A673 (cell line): ENCODE measurements at regions of chr1 and their contacts with region 1.

Region 1: DNA sequence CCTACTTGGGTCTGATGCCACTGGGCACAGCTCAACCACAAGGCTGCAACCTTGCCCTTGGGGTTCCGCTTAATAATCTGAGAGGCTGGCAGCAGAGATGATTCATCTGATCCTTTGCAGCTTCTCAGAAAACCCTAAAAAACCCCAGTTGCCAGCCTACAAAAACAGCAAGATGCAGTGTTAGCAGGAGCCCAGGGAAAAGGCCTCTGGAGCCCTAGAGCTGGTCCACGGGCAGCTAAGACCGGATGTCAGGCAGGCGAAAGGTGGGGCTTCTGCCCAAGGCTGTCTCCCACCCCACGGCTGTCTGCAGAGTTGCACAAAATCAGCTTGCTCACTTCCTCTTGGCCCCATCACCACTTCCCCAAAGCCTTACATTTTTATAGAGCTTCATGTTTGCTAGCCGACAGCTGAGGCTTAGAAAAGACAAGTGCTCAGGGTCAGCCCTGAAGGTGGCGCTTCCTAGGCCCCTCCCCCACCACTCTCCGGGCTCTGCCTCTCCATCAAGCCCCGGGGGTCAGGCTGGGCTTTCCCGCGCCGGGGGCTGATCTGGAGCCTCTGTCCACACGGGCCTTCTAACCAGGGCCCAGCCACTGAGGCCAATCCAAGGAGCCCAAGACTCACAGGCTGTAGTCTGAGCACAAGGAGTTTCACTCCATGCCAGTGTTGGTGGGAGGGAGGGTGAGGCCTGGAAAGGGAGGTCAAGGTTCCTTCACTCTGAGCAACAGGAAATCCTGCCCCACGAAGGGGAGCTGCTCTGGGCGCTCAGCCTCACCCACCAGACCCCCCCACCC is 4.2 kb upstream of the ADORA3 start:
- DNase-seq: no peak
- H3K4me3 ChIP-seq: no peak overlapping the region
- H3K27ac ChIP-seq: no peak overlapping the region
- H3K4me1 ChIP-seq: no peaks in the 10 kb centered on the region
- H3K27me3 ChIP-seq: peaks cover 4% of the 10 kb centered on the region
- CTCF ChIP-seq: no peak

Region 2: DNA sequence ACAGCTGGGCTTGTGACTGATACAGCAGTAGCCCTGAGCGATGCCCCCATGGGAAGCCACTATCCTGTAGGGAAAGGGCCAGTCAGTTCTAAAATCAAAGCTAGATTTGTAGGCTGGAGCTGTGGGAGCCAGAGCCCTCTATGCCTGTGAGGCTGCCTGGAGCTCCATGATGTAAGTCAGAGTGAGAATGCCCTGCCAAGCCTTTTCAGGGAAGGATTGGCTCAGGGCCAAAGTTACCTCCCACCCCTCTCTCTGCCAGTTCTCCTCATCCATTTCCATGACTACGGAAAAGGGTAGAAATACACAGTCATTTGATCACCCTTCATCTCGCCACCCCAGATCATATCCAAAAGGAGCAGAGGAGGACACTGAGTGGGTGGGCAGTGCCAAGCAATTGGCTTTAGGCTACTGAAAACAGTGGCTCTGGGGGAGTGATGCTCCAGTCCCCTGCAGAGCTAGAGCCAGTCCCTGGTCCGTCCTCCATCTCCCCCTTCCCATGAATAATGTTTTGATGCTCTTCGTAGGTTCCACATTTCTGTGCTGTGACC is 773.4 kb before region 1 on chr1:
- CTCF ChIA-PET with region 1: no interaction called
- POLR2A ChIA-PET with region 1: no interaction called
- intact Hi-C with region 1: no loop called
- DNase-seq: no peak
- H3K4me3 ChIP-seq: no peak overlapping the region
- H3K27ac ChIP-seq: no peak overlapping the region
- H3K4me1 ChIP-seq: no peaks in the 10 kb centered on the region
- H3K27me3 ChIP-seq: peaks cover 82% of the 10 kb centered on the region
- CTCF ChIP-seq: no peak

Region 3: GRCh38 chr1:111656086-111657017 is 148.7 kb after region 1 on chr1:
- CTCF ChIA-PET with region 1: interaction called, 15 read pairs
- POLR2A ChIA-PET with region 1: no interaction called
- intact Hi-C with region 1: loop called (anchors 5 kb)
- DNase-seq: peak; percentile 31
- H3K4me3 ChIP-seq: no peak overlapping the region
- H3K27ac ChIP-seq: no peak overlapping the region
- H3K4me1 ChIP-seq: peaks cover 3% of the 10 kb centered on the region
- H3K27me3 ChIP-seq: no peaks in the 10 kb centered on the region
- CTCF ChIP-seq: peak; percentile 46; the same call in 1 of the 2 replicates

Region 4: GRCh38 chr1:111747282-111747734 is 239.7 kb after region 1 on chr1:
- CTCF ChIA-PET with region 1: interaction called, 11 read pairs
- POLR2A ChIA-PET with region 1: no interaction called
- intact Hi-C with region 1: loop called (anchors 1 kb)
- DNase-seq: peak; percentile 85
- H3K4me3 ChIP-seq: no peak overlapping the region
- H3K27ac ChIP-seq: no peak overlapping the region
- H3K4me1 ChIP-seq: no peaks in the 10 kb centered on the region
- H3K27me3 ChIP-seq: peaks cover 6% of the 10 kb centered on the region
- CTCF ChIP-seq: peak; percentile 77

Region 5: DNA sequence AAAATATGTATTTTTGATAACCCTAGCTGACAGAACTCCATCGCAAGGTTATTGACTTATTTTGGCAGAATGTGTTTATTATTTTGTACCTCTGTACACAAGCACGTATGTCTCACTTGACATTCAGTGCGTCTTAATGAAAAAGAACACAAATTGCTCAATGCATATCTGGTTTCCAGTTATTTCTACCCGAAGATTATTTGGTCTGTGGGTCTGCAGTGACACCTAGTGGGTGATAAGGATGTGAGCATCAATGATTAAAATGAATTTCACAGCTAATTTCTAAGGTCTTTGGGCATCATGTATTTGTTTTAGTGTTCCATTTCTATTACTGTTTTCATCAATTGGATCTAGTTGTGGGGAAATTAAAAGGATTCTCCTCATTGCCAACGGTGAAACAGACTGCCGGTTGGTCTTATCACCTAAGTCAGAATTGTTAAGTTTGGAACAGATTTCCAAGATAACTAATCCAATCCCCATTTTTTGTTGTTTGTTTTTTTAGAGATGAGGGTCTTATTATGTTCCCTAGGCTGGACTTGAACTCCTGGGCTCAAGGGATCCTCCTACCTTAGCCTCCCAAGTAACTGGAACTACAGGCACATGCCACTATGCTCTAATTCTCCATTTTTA is 262.0 kb after region 1 on chr1:
- CTCF ChIA-PET with region 1: interaction called, 3 read pairs
- POLR2A ChIA-PET with region 1: no interaction called
- intact Hi-C with region 1: loop called (anchors 2 kb)
- DNase-seq: peak; percentile 78
- H3K4me3 ChIP-seq: no peak overlapping the region
- H3K27ac ChIP-seq: no peak overlapping the region
- H3K4me1 ChIP-seq: no peaks in the 10 kb centered on the region
- H3K27me3 ChIP-seq: no peaks in the 10 kb centered on the region
- CTCF ChIP-seq: peak; percentile 86